Sigmoid colon (tissue), 7 donors: ENCODE measurements at regions of chr4 and their contacts with region 1.

Region 1: DNA sequence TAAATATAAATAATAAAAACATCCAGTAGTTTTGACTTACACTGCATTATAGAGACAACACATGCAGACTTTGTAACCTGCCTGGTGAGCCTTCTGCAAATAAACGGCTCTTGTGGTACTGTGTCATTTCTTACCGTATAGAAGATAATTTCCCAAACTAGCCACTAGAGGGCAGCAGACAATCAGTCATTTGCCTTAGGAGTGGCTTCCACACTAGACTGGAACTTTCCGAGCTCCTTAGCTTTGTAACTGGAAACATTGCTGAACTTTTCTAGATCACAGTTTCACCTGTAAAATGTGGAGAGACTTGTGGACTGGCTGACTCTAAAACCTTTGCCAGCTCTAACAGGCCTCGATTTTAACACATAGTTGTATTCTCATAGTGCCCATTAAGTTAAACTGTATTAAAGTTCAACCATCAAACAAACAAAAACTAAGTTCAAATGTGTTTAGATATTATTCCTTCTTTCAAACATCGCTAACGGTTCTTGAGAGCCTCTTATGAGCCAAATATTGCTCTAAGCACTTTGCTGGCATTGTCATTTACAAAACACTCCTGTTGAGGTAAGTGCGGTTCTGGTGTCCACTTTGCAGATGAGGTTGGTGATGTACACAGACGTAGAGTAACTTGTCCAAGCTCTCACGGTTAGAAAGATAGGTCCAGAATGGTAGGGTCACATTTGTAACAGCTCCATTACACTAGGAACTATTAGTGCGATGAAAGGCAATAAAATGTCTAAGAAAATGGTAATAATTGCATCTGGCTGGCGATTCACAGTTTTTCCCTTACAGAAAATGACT is 345.5 kb downstream of the ANK2 start:
- DNase-seq: peak; percentile 66
- H3K4me3 ChIP-seq: no peak overlapping the region
- H3K27ac ChIP-seq: peak overlapping the region; percentile 33 to 70 (median 56)
- H3K4me1 ChIP-seq: peaks cover 0 to 24% (median 18%) of the 10 kb centered on the region in 4 donors
- H3K27me3 ChIP-seq: no peaks in the 10 kb centered on the region
- CTCF ChIP-seq: peak; percentile 70 to 88 (median 85)
- EP300 ChIP-seq: no peak
- POLR2A ChIP-seq: no peak

Region 2: GRCh38 chr4:113435893-113436292 is 41.0 kb after region 1 on chr4:
- intact Hi-C with region 1: loop called (anchors 5 kb)
- DNase-seq: peak; percentile 85
- H3K4me3 ChIP-seq: no peak overlapping the region
- H3K27ac ChIP-seq: peak overlapping the region; percentile 59 to 81 (median 72)
- H3K4me1 ChIP-seq: peaks cover 0 to 63% (median 49%) of the 10 kb centered on the region in 4 donors
- H3K27me3 ChIP-seq: no peaks in the 10 kb centered on the region
- CTCF ChIP-seq: no peak
- EP300 ChIP-seq: peak in 1 of 4 donors; percentile 5
- POLR2A ChIP-seq: no peak

Region 3: DNA sequence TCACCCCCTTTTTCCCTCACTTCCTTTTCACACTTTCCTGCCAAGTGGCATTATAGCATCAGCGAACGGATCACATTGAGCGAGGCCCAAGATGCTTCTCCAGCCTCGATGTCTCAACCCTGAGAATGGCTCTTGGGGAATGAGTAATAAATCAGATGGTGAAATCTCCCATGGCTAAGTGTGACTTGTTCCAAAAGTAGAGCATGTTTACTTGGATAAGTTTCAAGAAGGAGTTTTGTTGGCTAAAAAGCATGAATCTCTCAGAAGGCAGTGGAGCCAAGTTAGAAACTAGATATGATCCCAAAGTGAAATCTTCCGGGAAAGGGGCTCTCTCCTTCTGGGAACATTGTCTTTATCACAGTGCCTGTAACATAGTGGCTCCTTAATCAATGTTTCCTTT is 50.4 kb after region 1 on chr4:
- intact Hi-C with region 1: loop called (anchors 5 kb)
- DNase-seq: peak; percentile 85
- H3K4me3 ChIP-seq: no peak overlapping the region
- H3K27ac ChIP-seq: peak overlapping the region; percentile 69 to 80 (median 72)
- H3K4me1 ChIP-seq: peaks cover 0 to 63% (median 46%) of the 10 kb centered on the region in 4 donors
- H3K27me3 ChIP-seq: no peaks in the 10 kb centered on the region
- CTCF ChIP-seq: no peak
- EP300 ChIP-seq: peak in 1 of 4 donors; percentile 57
- POLR2A ChIP-seq: no peak

Region 4: GRCh38 chr4:113547487-113548042 is 152.6 kb after region 1 on chr4:
- intact Hi-C with region 1: loop called (anchors 2 kb)
- DNase-seq: peak; percentile 89
- H3K4me3 ChIP-seq: no peak overlapping the region
- H3K27ac ChIP-seq: peak overlapping the region; percentile 19 to 54 (median 33)
- H3K4me1 ChIP-seq: peaks cover 0 to 14% (median 7%) of the 10 kb centered on the region in 4 donors
- H3K27me3 ChIP-seq: no peaks in the 10 kb centered on the region
- CTCF ChIP-seq: peak; percentile 76 to 99 (median 94)
- EP300 ChIP-seq: no peak
- POLR2A ChIP-seq: no peak

Region 5: GRCh38 chr4:113761620-113762185 is 366.8 kb after region 1 on chr4 and contains the start of gene CAMK2D:
- intact Hi-C with region 1: loop called (anchors 2 kb)
- DNase-seq: peak; percentile 95
- H3K4me3 ChIP-seq: peak within 1 kb of the TSS; percentile 75 to 89 (median 80)
- H3K27ac ChIP-seq: peak within 1 kb of the TSS; percentile 92 to 99 (median 98)
- H3K4me1 ChIP-seq: peaks cover 0 to 34% (median 24%) of the 10 kb centered on the region in 4 donors
- H3K27me3 ChIP-seq: no peaks in the 10 kb centered on the region
- CTCF ChIP-seq: peak in 3 of 4 experiments; percentile 42 to 64 (median 47)
- EP300 ChIP-seq: no peak
- POLR2A ChIP-seq: peak; percentile 27 to 36
- total RNA-seq, gene CAMK2D: 54.0 to 78.1 (median 68.8) TPM

Region 6: DNA sequence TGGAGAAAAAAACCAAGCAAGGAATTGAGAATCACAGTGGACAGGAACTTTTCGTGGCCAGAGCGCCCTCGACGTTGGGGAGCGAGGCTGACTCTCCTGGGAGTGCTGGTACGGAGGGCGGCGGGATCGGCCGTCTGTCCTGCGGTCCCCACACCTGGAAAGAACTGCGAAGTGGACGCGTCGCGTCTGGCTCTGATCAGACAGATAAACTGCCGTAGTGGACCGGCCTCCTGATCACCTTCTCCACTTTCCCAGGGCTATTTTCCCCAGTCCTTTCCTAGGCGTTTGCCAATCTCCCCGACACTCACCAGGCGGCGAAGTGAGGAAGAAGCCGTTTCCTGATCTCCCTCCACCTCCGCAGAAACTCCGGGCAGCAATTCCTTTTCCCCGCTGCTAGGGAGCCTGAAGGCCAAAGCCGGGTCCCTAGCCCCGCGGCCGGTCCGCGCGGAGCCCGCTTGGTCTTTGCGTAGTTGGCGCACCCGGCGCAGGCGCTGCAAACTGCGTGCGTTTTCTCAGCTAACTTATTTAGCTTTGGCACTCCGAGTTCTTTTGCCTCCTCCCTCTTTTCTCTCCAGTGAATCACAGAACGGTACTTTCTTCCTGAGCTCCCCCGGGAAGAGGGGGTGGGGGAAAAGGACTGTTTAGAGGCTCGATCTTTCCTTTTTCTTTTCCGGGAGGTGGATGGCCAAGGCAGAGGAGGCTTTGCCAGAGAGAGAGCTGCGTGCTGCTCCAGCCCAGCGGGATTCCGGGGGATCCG is 584.4 kb after region 1 on chr4 and contains the start of gene ARSJ:
- intact Hi-C with region 1: loop called (anchors 10 kb)
- DNase-seq: peak; percentile 81
- H3K4me3 ChIP-seq: peak within 1 kb of the TSS; percentile 56 to 81 (median 63)
- H3K27ac ChIP-seq: peak within 1 kb of the TSS; percentile 86 to 91 (median 89)
- H3K4me1 ChIP-seq: peaks cover 0 to 50% (median 25%) of the 10 kb centered on the region in 4 donors
- H3K27me3 ChIP-seq: no peaks in the 10 kb centered on the region
- CTCF ChIP-seq: no peak
- EP300 ChIP-seq: peak in 1 of 4 donors; percentile 4
- POLR2A ChIP-seq: peak; percentile 21 to 29
- total RNA-seq, gene ARSJ: 7.2 to 11.9 (median 10.1) TPM

Region 7: DNA sequence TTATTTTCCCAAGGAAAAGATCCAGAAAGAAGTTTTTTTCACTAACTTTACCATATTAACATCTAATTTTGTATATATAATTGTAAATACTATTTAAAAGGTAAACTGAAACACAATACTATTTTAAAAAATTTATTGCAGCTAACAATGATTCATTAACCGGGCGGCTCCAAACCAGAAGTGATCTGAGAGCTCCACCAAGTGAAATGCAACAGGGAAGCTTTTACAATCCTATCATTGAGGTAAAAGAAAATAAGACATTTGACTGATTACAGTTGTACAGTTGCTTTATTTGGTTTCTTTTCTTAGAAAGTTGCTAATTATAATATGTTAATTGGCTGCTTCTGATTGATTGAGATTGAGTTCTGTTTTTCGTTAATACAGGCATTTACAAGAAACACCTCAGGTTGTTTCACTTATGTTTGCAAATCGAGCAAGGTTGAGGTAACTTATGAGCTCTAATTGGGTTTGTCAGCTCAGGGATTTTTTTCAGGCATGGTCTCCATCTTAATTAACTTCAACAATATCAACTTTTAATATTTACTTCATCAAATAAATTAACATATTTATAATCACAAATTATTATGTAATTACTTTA is 983.5 kb after region 1 on chr4:
- intact Hi-C with region 1: loop called (anchors 2 kb)
- DNase-seq: no peak
- H3K4me3 ChIP-seq: no peak overlapping the region
- H3K27ac ChIP-seq: no peak overlapping the region
- H3K4me1 ChIP-seq: peaks cover 0 to 7% (median 3%) of the 10 kb centered on the region in 4 donors
- H3K27me3 ChIP-seq: no peaks in the 10 kb centered on the region
- CTCF ChIP-seq: peak in 1 of 4 experiments; percentile 41
- EP300 ChIP-seq: no peak
- POLR2A ChIP-seq: no peak